ENCODE measurements at regions of chr2 and their contacts with region 1.

Region 1: DNA sequence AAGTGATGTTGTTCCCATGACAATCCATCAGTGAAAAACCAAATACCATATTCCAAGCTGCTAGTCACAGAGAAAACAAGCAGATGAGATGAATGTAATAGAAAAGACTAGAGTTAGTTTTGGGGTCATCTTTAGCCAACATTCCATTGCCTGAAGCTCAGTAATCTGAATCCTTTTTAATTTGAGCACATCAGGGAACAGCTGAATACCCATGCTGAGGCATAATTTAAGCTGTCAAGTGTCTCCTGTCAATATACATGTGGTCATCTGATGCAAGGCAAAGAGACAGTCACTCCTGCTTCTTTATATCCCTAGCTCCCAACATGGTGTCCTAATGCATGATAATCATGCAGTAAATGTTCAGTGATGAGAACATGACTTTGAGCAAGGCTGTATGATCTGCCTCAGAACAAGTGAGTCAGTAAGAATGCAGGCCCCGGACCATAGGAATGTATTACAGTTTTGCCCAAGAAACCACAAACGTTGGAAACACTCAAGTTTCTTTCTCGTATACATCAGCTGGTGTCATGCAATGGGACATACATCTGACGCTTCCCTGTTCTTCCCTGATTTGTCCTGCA is 48.0 kb downstream of the CDK15 start:
- DNase-seq: peak; percentile 99
- H3K4me3 ChIP-seq: peak overlapping the region; percentile 36
- CTCF ChIP-seq: no peak

Region 2: DNA sequence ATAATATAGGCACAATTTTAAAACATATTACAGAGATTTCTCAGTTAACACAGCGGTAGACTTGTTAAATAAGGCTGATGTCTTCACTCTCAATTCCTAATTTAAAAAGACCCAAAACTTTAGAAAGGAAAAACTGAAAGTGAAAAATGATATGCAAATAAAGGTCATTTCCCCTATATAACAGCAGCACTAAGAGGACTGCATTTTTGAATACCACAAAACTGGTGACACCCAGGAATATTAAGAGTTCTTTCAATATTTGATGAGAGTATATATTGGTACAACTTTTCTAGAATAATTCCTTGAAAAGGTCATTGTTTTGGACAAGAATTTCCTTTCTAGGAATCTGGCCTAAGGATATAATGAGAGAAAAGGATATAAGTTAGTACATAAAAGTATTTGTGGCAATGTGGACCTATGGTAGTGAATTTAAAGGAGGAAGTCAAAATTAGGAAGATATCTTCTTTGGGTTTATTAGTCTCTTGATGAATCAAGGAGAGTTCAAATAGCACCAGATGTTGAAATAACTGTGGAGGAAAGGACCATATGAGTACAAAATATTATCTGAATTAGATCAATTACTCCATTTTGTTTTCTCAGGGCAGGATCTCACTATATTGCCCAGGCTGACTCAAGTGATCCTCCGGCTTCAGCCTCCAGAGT is 281.3 kb before region 1 on chr2:
- CTCF ChIA-PET with region 1: no interaction called
- POLR2A ChIA-PET with region 1: no interaction called
- DNase-seq: no peak
- H3K4me3 ChIP-seq: no peak overlapping the region
- CTCF ChIP-seq: no peak

Region 3: DNA sequence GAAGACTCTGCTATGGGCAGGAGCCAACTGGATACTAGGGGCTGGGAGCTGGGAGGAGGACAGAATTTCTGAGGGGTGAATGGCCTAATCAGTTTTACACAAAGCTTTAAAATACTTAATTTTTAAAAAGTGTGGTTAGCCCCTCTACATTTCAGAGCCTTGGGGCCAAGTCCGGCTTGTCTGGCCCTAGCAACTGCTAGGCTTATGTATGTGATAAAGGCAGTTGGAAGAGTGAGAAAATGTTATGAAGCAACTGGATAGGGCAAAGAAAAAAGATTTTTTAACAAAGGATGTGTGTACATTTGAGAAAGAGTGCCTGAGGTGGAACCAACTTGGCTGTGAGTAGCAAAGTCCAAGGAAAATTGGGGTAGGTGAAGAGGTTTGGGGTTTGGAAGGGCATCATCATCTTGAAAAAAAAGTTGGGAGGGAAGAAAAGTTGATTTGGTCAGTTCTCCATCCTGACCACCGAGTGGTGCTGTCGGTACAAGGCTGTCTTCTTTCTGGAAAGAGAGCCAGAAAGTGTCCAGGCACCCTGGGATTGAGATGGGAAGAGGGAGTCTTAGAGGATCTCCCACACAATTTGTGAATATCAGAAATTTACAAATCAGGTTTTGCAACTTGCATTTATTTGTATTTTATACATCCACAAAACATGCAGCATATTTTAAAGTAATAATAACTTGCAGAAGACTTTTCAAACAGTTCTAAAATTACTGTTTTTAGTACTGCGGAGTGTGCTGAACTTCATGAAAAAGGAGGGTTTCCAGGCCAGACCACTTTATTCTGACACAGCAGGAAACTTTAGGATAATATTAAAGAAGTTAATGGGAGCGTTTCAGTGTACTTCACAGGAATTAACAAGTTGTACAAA is 58.5 kb before region 1 on chr2:
- CTCF ChIA-PET with region 1: interaction called, 32 read pairs
- POLR2A ChIA-PET with region 1: interaction called, 24 read pairs
- DNase-seq: no peak
- H3K4me3 ChIP-seq: no peak overlapping the region
- CTCF ChIP-seq: peak; percentile 81

Region 4: DNA sequence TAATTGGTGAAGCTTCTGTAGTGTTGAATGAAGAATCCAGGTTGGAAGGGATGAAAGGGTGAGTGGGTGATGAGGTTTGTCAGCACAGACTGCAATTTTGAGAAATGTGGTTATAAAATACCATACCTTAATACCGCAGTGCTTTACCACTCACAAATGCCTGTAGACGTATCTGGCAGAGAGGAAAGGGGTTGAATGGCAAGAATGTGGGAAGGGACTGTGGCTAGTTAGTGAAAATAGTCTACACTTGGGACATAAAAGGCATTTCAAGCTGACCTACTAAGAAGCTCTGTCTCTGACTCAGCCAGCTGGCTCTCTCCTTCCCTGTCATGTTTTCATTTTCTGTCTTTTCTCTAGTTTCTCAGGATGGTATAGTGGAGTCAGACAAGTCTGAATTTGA is 22.8 kb before region 1 on chr2:
- CTCF ChIA-PET with region 1: interaction called, 12 read pairs
- POLR2A ChIA-PET with region 1: interaction called, 20 read pairs
- DNase-seq: peak; percentile 97
- H3K4me3 ChIP-seq: no peak overlapping the region
- CTCF ChIP-seq: no peak

Region 5: GRCh38 chr2:201882353-201883090 is 28.2 kb after region 1 on chr2:
- CTCF ChIA-PET with region 1: interaction called, 8 read pairs
- POLR2A ChIA-PET with region 1: interaction called, 10 read pairs
- DNase-seq: no peak
- H3K4me3 ChIP-seq: no peak overlapping the region
- CTCF ChIP-seq: no peak

Region 6: DNA sequence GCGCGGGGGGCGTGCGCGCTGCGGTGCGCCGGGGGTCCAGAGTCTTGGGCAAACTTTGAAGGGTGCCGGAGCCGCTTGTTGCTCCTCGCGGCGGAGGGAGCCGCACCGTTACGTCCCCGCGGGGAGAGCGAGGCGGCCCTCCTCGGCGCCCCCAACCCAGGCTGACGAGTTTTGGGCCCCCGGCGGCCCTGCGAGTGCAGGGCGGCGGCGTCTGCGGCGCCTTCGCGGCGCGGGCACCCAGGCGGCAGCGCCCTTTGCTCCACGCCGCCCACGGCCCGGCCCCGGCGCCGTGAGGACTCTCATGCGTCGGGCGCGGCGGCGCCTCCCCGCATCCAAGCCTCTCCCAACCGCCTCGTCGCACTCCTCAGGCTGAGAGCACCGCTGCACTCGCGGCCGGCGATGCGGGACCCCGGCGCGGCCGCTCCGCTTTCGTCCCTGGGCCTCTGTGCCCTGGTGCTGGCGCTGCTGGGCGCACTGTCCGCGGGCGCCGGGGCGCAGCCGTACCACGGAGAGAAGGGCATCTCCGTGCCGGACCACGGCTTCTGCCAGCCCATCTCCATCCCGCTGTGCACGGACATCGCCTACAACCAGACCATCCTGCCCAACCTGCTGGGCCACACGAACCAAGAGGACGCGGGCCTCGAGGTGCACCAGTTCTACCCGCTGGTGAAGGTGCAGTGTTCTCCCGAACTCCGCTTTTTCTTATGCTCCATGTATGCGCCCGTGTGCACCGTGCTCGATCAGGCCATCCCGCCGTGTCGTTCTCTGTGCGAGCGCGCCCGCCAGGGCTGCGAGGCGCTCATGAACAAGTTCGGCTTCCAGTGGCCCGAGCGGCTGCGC is 180.2 kb after region 1 on chr2:
- CTCF ChIA-PET with region 1: interaction called, 35 read pairs
- POLR2A ChIA-PET with region 1: interaction called, 9 read pairs
- DNase-seq: no peak
- H3K4me3 ChIP-seq: peak overlapping the region; percentile 91
- CTCF ChIP-seq: no peak

Measured in AG04449 (cell line).